ENCODE measurements at regions of chr22 and their contacts with region 1.

Region 1: GRCh38 chr22:25202290-25202921 is 2.7 kb downstream of the CRYBB3 start:
- DNase-seq: peak; percentile 8
- ATAC-seq: peak; percentile 92
- H3K4me3 ChIP-seq: no peak overlapping the region
- H3K27ac ChIP-seq: no peak overlapping the region
- H3K4me1 ChIP-seq: no peaks in the 10 kb centered on the region
- H3K27me3 ChIP-seq: no peaks in the 10 kb centered on the region; a peak in 1 of 4 replicates
- CTCF ChIP-seq: peak; percentile 87 to 93 (median 91)
- EP300 ChIP-seq: no peak
- POLR2A ChIP-seq: no peak
- RAD21 ChIP-seq: peak; percentile 76

Region 2: DNA sequence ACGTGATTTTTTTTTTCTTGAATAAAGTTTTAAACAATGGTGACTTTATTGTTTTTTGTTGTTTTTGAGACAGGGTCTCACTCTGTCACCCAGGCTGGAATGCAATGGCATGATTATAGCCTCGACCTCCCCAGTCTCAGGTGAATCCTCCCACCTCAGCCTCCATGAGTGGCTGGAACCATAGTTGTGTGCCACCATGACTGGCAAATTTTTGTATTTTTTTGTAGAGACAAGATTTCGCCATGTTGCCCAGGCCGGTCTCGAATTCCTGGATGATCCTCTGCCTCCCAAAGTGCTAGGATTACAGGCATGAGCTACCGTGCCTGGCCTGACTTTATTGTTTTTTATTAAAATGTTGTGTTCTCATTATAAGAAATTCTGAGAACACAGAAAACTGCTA is 14.9 kb before region 1 on chr22:
- CTCF ChIA-PET with region 1: interaction called, 10 read pairs
- POLR2A ChIA-PET with region 1: no interaction called
- RAD21 ChIA-PET with region 1: no interaction called
- SMC1A ChIA-PET with region 1: no interaction called
- in situ Hi-C with region 1: no loop called
- intact Hi-C with region 1: no loop called
- DNase-seq: no peak
- ATAC-seq: no peak
- H3K4me3 ChIP-seq: no peak overlapping the region
- H3K27ac ChIP-seq: no peak overlapping the region
- H3K4me1 ChIP-seq: no peaks in the 10 kb centered on the region
- H3K27me3 ChIP-seq: no peaks in the 10 kb centered on the region
- CTCF ChIP-seq: no peak
- EP300 ChIP-seq: no peak
- POLR2A ChIP-seq: no peak
- RAD21 ChIP-seq: no peak

Region 3: DNA sequence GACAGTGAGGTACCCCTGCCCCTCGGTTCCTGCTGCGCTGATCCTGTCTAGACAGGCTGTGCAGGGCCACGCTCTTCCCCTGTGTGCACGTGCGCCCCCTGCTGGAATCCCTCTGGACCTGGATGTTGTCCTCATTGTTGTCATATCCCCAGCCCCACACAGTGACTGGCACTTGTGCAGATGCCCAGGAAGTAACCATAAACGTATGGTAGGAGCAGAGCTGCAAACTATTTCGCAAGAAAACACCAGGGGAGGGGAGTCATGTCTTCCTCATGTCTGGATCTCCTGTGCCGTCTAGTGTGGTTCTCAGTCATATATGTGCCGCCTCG is 131.7 kb after region 1 on chr22:
- CTCF ChIA-PET with region 1: interaction called, 21 read pairs
- POLR2A ChIA-PET with region 1: no interaction called
- RAD21 ChIA-PET with region 1: interaction called, 6 read pairs
- SMC1A ChIA-PET with region 1: interaction called, 3 read pairs
- in situ Hi-C with region 1: no loop called
- intact Hi-C with region 1: loop called (anchors 1 kb)
- DNase-seq: peak; percentile 0
- ATAC-seq: peak; percentile 97
- H3K4me3 ChIP-seq: no peak overlapping the region
- H3K27ac ChIP-seq: no peak overlapping the region
- H3K4me1 ChIP-seq: no peaks in the 10 kb centered on the region
- H3K27me3 ChIP-seq: no peaks in the 10 kb centered on the region
- CTCF ChIP-seq: peak; percentile 53 to 80 (median 64)
- EP300 ChIP-seq: no peak
- POLR2A ChIP-seq: no peak
- RAD21 ChIP-seq: peak; percentile 34; the same call in 1 of the 2 replicates

Region 4: GRCh38 chr22:25582946-25583345 is 380.5 kb after region 1 on chr22:
- CTCF ChIA-PET with region 1: no interaction called
- POLR2A ChIA-PET with region 1: no interaction called
- RAD21 ChIA-PET with region 1: no interaction called
- SMC1A ChIA-PET with region 1: no interaction called
- in situ Hi-C with region 1: no loop called
- intact Hi-C with region 1: no loop called
- DNase-seq: no peak
- ATAC-seq: no peak
- H3K4me3 ChIP-seq: no peak overlapping the region
- H3K27ac ChIP-seq: no peak overlapping the region
- H3K4me1 ChIP-seq: peaks cover 3% of the 10 kb centered on the region; the same call in 1 of the 2 replicates
- H3K27me3 ChIP-seq: no peaks in the 10 kb centered on the region
- CTCF ChIP-seq: no peak
- EP300 ChIP-seq: no peak
- POLR2A ChIP-seq: no peak
- RAD21 ChIP-seq: no peak